AG04449 (cell line): ENCODE measurements at regions of chrX and their contacts with region 1.

Region 1: GRCh38 chrX:38166478-38167083 is 54.1 kb downstream of the SRPX start:
- DNase-seq: no peak
- H3K4me3 ChIP-seq: no peak overlapping the region
- CTCF ChIP-seq: peak; percentile 6

Region 2: GRCh38 chrX:37745354-37745753 is 421.2 kb before region 1 on chrX:
- CTCF ChIA-PET with region 1: interaction called, 36 read pairs
- POLR2A ChIA-PET with region 1: no interaction called
- DNase-seq: peak; percentile 5
- H3K4me3 ChIP-seq: no peak overlapping the region
- CTCF ChIP-seq: peak; percentile 81

Region 3: GRCh38 chrX:37926700-37927099 is 239.9 kb before region 1 on chrX:
- CTCF ChIA-PET with region 1: interaction called, 105 read pairs
- POLR2A ChIA-PET with region 1: no interaction called
- DNase-seq: peak; percentile 0
- H3K4me3 ChIP-seq: no peak overlapping the region
- CTCF ChIP-seq: peak; percentile 17

Region 4: GRCh38 chrX:38151441-38151840 is 15.1 kb before region 1 on chrX:
- CTCF ChIA-PET with region 1: interaction called, 28 read pairs
- POLR2A ChIA-PET with region 1: no interaction called
- DNase-seq: peak; percentile 54
- H3K4me3 ChIP-seq: no peak overlapping the region
- CTCF ChIP-seq: no peak

Region 5: GRCh38 chrX:38183596-38183995 is 17.0 kb after region 1 on chrX:
- CTCF ChIA-PET with region 1: interaction called, 29 read pairs
- POLR2A ChIA-PET with region 1: no interaction called
- DNase-seq: no peak
- H3K4me3 ChIP-seq: no peak overlapping the region
- CTCF ChIP-seq: no peak

Region 6: DNA sequence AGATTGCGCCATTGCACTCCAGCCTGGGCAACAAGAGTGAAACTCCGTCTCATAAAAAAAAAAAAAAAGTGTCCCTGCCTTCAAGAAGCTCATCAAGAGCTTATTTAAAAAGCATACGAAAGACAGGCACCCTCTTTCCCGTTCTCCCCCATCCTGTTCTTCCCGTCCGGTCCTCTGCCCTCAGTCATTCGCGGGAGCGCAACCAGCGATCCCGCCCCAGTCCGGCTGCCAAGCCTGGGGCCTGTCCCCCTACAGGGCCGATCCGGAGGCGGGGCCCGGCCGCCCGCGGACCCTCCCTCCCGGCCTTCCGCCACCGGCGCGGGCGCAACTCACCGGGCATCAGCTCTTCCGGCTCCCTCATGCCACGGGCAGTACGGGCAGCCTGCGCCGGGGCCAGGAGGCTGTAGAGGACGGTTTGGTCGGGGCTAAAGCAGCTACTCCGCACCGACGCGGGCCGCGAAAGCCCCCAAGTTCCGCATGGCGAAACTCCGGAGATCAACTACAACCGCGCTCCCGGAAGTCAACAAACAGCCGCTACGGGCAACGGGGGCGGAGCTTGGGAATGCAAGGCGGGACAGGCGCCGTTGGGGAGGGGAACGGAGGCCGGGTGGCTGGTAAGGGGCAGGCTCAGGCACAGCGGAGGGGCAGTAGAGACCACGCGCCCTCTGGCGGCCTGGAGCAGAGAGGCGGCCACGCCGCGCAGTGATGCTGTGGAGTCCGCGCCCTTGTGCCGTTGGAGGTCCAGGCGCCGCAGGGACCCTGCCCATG is 160.6 kb after region 1 on chrX and contains the start of gene RPGR:
- CTCF ChIA-PET with region 1: interaction called, 21 read pairs
- POLR2A ChIA-PET with region 1: no interaction called
- DNase-seq: no peak
- H3K4me3 ChIP-seq: peak within 1 kb of the TSS; percentile 70
- CTCF ChIP-seq: peak; percentile 90